ENCODE measurements at regions of chr15 and their contacts with region 1.

Region 1: DNA sequence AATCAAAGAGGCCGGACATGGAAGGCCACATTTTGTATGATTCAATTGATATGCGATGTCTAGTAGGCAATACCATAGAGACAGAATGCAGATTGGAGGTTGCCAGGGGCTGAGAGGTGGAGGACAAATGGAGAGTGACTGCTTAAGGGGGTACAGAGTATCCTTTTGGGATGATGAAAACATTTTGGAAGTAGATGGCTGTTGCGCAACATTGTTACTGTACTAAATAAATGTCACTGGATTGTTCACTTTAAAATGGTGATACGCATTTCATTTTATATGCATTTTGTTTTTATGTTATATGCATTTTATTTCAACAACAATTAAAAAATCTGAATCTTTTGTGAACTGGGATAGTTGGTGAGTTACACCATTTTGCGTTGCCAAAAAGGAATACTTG is 99.7 kb upstream of the AGBL1 start:
- DNase-seq: no peak
- ATAC-seq: no peak
- H3K4me3 ChIP-seq: no peak overlapping the region
- H3K27ac ChIP-seq: no peak overlapping the region
- H3K4me1 ChIP-seq: no peaks in the 10 kb centered on the region
- H3K27me3 ChIP-seq: peaks cover 0 to 16% (median 0%) of the 10 kb centered on the region in 7 donors
- CTCF ChIP-seq: no peak

Region 2: DNA sequence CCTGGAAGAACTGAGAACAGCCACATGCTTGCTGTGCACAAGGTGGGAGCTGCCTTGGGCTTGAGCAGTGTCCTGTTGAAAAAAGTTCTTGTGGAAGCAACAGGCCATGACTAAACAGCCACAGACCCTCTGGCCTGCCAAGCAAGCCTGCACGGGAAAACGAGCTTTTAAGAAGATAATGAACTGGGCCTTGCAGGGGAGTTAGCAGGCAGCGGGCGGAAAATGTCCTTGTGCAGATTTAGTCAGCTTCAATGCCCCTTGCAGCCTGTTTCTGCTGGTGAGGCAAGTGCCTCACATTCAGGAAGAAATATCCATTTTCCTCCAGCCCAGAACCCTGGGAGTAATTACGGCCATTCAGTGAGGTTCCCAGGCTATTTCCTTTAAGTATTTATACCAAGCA is 59.0 kb before region 1 on chr15:
- intact Hi-C with region 1: no loop called
- DNase-seq: no peak
- ATAC-seq: no peak
- H3K4me3 ChIP-seq: no peak overlapping the region
- H3K27ac ChIP-seq: no peak overlapping the region
- H3K4me1 ChIP-seq: no peaks in the 10 kb centered on the region
- H3K27me3 ChIP-seq: peaks cover 0 to 29% (median 9%) of the 10 kb centered on the region in 7 donors
- CTCF ChIP-seq: no peak

Region 3: DNA sequence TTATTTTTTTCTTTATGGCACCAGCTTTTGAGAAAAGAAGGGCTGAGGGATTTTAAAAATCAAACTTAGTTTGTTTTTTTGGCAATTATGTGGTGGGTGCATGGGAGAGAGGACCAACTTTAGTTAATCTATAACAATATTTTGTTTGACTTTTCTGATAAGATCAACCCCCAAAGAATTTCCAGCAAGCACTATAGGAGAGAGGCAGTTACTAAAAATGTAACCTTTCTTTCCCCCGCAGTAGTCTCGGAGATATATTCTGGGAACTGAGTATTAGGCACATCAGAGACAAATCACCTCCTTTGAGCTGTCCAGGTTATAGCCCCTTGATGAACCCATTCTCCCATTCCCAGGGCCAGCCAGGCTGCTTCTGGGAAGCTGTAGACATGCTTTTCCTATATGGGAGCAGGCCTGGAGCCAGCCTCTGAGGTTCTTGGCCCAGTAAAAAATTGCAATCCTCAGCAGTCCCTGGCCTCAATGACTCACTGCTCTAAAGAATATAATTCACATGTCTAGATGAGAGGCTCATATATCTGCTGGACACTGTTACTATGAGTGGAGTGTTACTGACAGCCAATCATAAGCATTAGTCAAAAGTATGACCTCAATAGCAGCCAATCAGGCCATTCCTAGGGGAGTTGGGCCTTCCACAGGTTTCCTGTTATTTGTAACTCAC is 38.6 kb before region 1 on chr15:
- intact Hi-C with region 1: no loop called
- DNase-seq: no peak
- ATAC-seq: no peak
- H3K4me3 ChIP-seq: no peak overlapping the region
- H3K27ac ChIP-seq: no peak overlapping the region
- H3K4me1 ChIP-seq: no peaks in the 10 kb centered on the region
- H3K27me3 ChIP-seq: peaks cover 0 to 10% (median 0%) of the 10 kb centered on the region in 7 donors
- CTCF ChIP-seq: no peak

Region 4: GRCh38 chr15:85967553-85967952 is 12.4 kb before region 1 on chr15:
- intact Hi-C with region 1: loop called in 1 of 10 experiments (anchors 1 kb)
- DNase-seq: no peak
- ATAC-seq: no peak
- H3K4me3 ChIP-seq: no peak overlapping the region
- H3K27ac ChIP-seq: no peak overlapping the region
- H3K4me1 ChIP-seq: no peaks in the 10 kb centered on the region
- H3K27me3 ChIP-seq: peaks cover 0 to 10% (median 0%) of the 10 kb centered on the region in 7 donors
- CTCF ChIP-seq: no peak

Measured in heart right ventricle (tissue), 16 donors.